Gastrocnemius medialis (tissue), 4 donors: ENCODE measurements at regions of chr17 and their contacts with region 1.

Region 1: DNA sequence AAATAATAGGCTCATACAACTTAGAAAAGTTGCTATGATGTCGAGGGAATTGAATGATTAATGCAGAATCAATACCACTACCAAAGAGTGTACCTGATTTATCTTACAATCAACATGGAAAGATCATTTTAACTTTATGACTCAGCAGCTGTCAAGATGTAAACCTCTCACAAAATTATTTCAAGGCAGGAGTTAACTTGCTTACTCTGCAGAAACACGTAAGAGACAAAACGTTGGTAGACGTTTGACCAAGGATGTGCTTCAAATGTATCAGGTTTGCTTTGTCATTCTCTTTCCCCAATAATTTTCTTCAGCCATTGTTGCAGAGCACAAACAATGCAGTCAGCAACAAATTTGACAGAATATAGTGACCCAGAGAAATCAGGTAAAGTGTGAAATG is 415.8 kb upstream of the KIF2B start:
- DNase-seq: no peak
- ATAC-seq: no peak
- H3K4me3 ChIP-seq: no peak overlapping the region
- H3K27ac ChIP-seq: no peak overlapping the region
- H3K4me1 ChIP-seq: no peaks in the 10 kb centered on the region
- H3K27me3 ChIP-seq: no peaks in the 10 kb centered on the region
- CTCF ChIP-seq: no peak
- POLR2A ChIP-seq: no peak

Region 2: DNA sequence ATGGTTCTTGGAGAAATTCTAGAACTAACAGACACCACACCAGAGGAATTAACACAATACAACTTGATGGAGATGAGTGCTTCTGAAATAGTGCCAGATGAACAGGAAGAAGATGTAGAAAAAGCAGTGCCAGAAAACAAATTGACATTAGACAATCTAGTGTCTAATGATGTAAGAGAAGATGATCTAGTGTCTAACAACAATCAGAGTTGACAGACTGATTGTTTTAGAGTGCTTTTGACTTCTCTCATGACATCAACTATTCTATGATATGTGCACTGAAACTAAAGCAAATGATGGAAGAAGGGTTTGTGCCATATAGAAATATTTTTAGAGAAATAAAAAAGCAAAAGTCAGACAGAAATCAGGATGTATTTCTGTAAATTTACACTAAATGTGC is 230.3 kb before region 1 on chr17:
- in situ Hi-C with region 1: no loop called
- intact Hi-C with region 1: no loop called
- DNase-seq: no peak
- ATAC-seq: no peak
- H3K4me3 ChIP-seq: no peak overlapping the region
- H3K27ac ChIP-seq: no peak overlapping the region
- H3K4me1 ChIP-seq: no peaks in the 10 kb centered on the region
- H3K27me3 ChIP-seq: no peaks in the 10 kb centered on the region
- CTCF ChIP-seq: no peak
- POLR2A ChIP-seq: no peak

Region 3: GRCh38 chr17:53462393-53462811 is 55.5 kb after region 1 on chr17:
- in situ Hi-C with region 1: loop called in 1 of 4 experiments (anchors 10 kb)
- intact Hi-C with region 1: no loop called
- DNase-seq: no peak
- ATAC-seq: no peak
- H3K4me3 ChIP-seq: no peak overlapping the region
- H3K27ac ChIP-seq: no peak overlapping the region
- H3K4me1 ChIP-seq: no peaks in the 10 kb centered on the region
- H3K27me3 ChIP-seq: no peaks in the 10 kb centered on the region
- CTCF ChIP-seq: no peak
- POLR2A ChIP-seq: no peak